Colonic mucosa (tissue), 4 donors: ENCODE measurements at regions of chr2 and their contacts with region 1.

Region 1: GRCh38 chr2:182977463-182977862 is 60.8 kb downstream of the NCKAP1 start:
- DNase-seq: no peak
- H3K4me3 ChIP-seq: no peak overlapping the region
- H3K27ac ChIP-seq: no peak overlapping the region
- H3K4me1 ChIP-seq: no peaks in the 10 kb centered on the region
- H3K27me3 ChIP-seq: no peaks in the 10 kb centered on the region
- CTCF ChIP-seq: no peak

Region 2: GRCh38 chr2:182763311-182763912 is 214.1 kb before region 1 on chr2:
- intact Hi-C with region 1: loop called (anchors 5 kb)
- DNase-seq: no peak
- H3K4me3 ChIP-seq: no peak overlapping the region
- H3K27ac ChIP-seq: no peak overlapping the region
- H3K4me1 ChIP-seq: no peaks in the 10 kb centered on the region
- H3K27me3 ChIP-seq: no peaks in the 10 kb centered on the region
- CTCF ChIP-seq: peak; percentile 59

Region 3: GRCh38 chr2:182784777-182785176 is 192.7 kb before region 1 on chr2:
- intact Hi-C with region 1: loop called (anchors 5 kb)
- DNase-seq: no peak
- H3K4me3 ChIP-seq: no peak overlapping the region
- H3K27ac ChIP-seq: no peak overlapping the region
- H3K4me1 ChIP-seq: no peaks in the 10 kb centered on the region
- H3K27me3 ChIP-seq: no peaks in the 10 kb centered on the region
- CTCF ChIP-seq: peak; percentile 30

Region 4: DNA sequence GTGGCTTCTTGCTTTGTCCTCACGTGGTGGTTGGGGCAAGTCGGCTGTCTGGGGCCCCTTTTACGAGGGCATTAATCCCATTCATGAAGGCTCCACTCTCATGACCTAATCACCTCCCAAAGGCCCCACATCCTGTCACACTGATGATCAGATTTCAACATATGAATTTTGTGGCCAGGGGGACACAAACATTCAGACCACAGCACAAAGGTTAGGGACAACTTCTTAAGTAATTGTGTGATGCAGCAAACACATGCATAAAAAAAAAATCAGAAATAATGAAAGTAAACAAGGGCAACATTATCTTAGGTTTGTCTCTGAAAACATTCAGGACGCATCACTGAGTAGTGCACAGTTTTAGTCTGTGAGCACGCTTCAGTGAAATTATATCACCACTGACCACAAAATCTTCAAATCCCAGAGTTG is 56.8 kb before region 1 on chr2:
- intact Hi-C with region 1: loop called (anchors 10 kb)
- DNase-seq: no peak
- H3K4me3 ChIP-seq: no peak overlapping the region
- H3K27ac ChIP-seq: no peak overlapping the region
- H3K4me1 ChIP-seq: no peaks in the 10 kb centered on the region
- H3K27me3 ChIP-seq: no peaks in the 10 kb centered on the region
- CTCF ChIP-seq: no peak